Activated T-helper 2 cell treated with anti-CD3 and anti-CD28 coated beads, Interferon-gamma antibody, Interleukin-2, Interleukin-4, amounts not matched to agents 10 μg/mL and 5 μg/mL and 100 μg/mL, durations not matched to agents 14 hours and 24 hours and 36 hours (primary cell): ENCODE measurements at regions of chr2 and their contacts with region 1.

Region 1: GRCh38 chr2:221747289-221747972 is 175.3 kb upstream of the EPHA4 start:
- DNase-seq: no peak
- H3K4me3 Mint-ChIP-seq: no peak overlapping the region
- H3K27ac Mint-ChIP-seq: peak overlapping the region; percentile 44
- H3K4me1 Mint-ChIP-seq: no peaks in the 10 kb centered on the region
- H3K27me3 Mint-ChIP-seq: no peaks in the 10 kb centered on the region

Region 2: DNA sequence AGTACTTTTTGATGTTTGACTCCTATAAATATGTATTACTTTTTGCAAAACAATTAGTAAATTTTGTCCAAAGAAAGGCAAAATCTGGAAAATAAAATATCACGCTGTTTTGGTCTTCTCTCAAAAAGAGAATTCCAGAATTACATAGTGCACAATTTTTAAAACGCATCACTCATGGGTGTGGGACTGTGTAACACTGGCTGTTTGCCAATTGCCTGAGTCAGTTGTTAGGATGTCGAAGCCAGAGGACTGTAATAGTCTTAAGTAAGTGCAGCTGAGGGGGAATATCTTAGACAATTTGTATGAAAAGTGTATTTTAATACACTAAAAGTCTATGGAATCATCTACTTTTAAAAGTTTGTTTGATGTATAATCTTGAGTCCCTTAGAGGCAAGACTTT is 151.2 kb before region 1 on chr2:
- intact Hi-C with region 1: no loop called
- DNase-seq: no peak
- H3K4me3 Mint-ChIP-seq: no peak overlapping the region
- H3K27ac Mint-ChIP-seq: no peak overlapping the region
- H3K4me1 Mint-ChIP-seq: no peaks in the 10 kb centered on the region
- H3K27me3 Mint-ChIP-seq: no peaks in the 10 kb centered on the region

Region 3: GRCh38 chr2:221641181-221641871 is 106.1 kb before region 1 on chr2:
- intact Hi-C with region 1: loop called (anchors 1 kb)
- DNase-seq: no peak
- H3K4me3 Mint-ChIP-seq: no peak overlapping the region
- H3K27ac Mint-ChIP-seq: peak overlapping the region; percentile 33
- H3K4me1 Mint-ChIP-seq: peaks cover 2% of the 10 kb centered on the region
- H3K27me3 Mint-ChIP-seq: no peaks in the 10 kb centered on the region